ENCODE measurements at regions of chr3 and their contacts with region 1.

Region 1: GRCh38 chr3:55485211-55485791 is 1.8 kb downstream of the WNT5A start:
- DNase-seq: peak; percentile 79 to 91
- ATAC-seq: peak; percentile 82 to 85 (median 84)
- H3K4me3 ChIP-seq: peak overlapping the region; percentile 86
- H3K27ac ChIP-seq: peak overlapping the region; percentile 59
- H3K4me1 ChIP-seq: peaks cover 7% of the 10 kb centered on the region
- H3K27me3 ChIP-seq: peaks cover 0 to 13% (median 2%) of the 10 kb centered on the region in 3 donors
- CTCF ChIP-seq: peak; percentile 81

Region 2: DNA sequence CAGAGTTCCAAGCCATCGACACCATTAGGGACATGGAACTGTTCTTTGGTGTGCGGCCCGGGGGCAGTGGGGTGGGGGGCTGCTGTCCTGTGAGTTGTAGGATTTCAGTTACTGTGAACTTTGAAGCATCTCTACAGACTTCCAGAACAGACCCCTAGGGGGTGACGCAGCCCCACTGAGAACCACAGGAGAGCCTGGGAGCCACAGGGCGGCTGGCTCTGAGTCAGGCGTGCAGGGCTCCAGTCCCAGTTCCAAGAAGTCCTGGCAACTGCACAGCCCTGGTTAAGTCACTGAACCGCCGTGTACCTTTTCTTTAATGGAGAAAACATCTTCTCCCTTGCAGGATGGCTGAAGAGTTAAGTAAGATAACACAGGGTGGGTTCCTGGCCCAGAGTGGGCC is 533.9 kb before region 1 on chr3:
- intact Hi-C with region 1: loop called in 1 of 2 experiments (anchors 10 kb)
- DNase-seq: peak; percentile 86 to 92
- ATAC-seq: peak; percentile 96 to 100 (median 98)
- H3K4me3 ChIP-seq: no peak overlapping the region
- H3K27ac ChIP-seq: no peak overlapping the region
- H3K4me1 ChIP-seq: peaks cover 14% of the 10 kb centered on the region
- H3K27me3 ChIP-seq: no peaks in the 10 kb centered on the region
- CTCF ChIP-seq: peak; percentile 75

Region 3: GRCh38 chr3:55746808-55747413 is 261.6 kb after region 1 on chr3:
- intact Hi-C with region 1: loop called in 1 of 2 experiments (anchors 5 kb)
- DNase-seq: no peak
- ATAC-seq: no peak
- H3K4me3 ChIP-seq: no peak overlapping the region
- H3K27ac ChIP-seq: no peak overlapping the region
- H3K4me1 ChIP-seq: no peaks in the 10 kb centered on the region
- H3K27me3 ChIP-seq: no peaks in the 10 kb centered on the region
- CTCF ChIP-seq: peak; percentile 38

Region 4: DNA sequence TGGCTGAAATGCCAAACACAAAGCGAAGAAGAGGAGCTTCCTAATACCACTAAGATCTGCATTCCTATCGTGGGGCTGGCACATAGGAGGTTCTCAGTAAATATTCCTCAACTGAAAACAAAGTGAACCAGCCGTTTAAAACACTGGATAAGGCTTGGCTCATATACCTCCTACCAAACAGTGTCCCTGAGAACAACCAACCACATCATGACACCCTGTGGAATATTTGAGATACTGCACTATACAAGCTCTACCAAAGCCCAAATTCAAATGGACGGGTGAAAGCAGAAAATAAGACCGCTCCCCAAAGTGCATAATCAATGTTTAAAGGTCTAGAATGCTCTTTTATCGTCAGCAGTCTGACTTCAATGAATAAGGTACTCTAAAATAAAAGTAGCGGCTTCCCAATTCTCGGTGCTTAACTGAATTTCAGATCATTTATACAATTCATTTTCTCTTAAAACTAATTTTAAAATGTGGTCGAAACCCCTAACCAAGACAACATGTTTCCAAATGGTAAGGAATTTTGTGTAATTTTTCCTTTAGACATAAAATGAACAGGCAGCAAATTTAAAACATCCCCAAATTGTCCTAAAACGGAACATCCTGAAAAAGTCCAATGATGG is 557.1 kb after region 1 on chr3:
- intact Hi-C with region 1: loop called in 1 of 2 experiments (anchors 5 kb)
- DNase-seq: no peak
- ATAC-seq: peak; percentile 57 to 71 (median 60)
- H3K4me3 ChIP-seq: no peak overlapping the region
- H3K27ac ChIP-seq: no peak overlapping the region
- H3K4me1 ChIP-seq: no peaks in the 10 kb centered on the region
- H3K27me3 ChIP-seq: peaks cover 0 to 7% (median 1%) of the 10 kb centered on the region in 3 donors
- CTCF ChIP-seq: peak; percentile 34

Region 5: DNA sequence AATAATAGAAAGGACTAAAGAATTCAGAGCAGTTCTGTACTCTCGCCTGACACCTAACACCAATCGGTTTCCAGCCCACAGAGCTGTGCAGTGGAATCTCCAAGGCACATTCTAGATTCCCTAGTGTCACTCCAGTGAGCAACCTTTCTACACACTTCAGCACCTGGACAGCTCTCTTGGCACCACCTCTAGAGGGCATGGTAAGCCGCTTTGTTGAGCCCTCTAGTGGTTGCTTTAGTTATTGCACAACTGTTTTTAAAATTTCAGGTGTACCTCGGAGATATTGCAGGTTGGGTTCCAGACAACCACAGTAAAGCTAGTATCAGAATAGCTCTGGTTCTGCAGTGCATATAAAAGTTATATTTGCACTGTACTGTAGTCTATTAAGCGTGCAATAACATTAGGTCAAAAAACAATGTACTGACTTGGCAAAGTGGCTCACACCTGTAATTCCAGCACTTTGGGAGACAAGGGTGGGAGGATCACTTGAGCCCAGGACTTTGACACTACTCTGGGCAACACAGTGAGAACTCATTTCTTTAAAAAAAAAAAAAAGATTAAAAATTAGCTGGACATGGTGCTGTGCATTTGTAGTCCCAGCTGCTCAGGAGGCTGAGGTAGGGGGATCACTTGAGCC is 1009.5 kb after region 1 on chr3:
- intact Hi-C with region 1: loop called (anchors 10 kb)
- DNase-seq: peak; percentile 68 to 81
- ATAC-seq: peak; percentile 83 to 90 (median 89)
- H3K4me3 ChIP-seq: no peak overlapping the region
- H3K27ac ChIP-seq: no peak overlapping the region
- H3K4me1 ChIP-seq: no peaks in the 10 kb centered on the region
- H3K27me3 ChIP-seq: peaks cover 0 to 2% (median 0%) of the 10 kb centered on the region in 3 donors
- CTCF ChIP-seq: peak; percentile 84

Measured in psoas muscle (tissue), 8 donors.